Breast epithelium (tissue), 4 donors: ENCODE measurements at regions of chr15 and their contacts with region 1.

Region 1: DNA sequence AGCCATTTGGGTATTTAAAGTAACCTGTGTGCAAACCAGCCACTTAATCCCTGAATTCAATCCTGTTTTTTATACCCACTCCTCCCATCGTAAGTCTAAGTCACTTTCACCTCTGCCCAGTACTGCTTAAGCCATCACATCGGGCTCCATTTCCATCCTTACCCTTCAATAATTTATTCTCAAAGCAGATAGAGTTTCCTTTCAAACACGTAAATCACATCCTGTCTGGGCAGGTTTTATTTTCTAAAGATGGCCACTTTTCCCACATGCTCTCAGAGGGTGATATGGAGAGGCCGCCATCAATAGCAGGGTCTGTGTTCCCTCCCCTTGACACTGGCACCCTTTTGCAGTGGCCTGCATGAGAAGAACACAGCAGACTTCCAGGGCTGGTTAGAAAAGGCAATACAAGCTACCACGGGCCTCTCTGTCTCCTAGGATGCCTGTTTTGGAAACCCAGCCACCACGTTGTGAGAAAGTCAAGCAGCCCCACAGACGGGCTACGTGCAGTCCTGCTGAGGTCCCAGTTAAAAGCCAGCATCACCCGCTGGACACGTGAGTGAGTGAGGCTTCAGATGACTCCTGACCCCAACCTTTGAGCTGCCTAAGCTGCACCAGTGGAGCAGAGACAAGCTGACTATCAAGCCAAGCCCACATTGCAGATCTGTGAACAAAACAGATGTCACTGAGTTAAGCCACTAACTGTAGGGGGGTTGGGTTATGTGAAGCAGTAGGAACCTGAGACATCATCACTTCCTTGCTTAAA is 241.8 kb upstream of the SLCO3A1 start:
- DNase-seq: no peak
- H3K4me3 ChIP-seq: no peak overlapping the region
- H3K27ac ChIP-seq: no peak overlapping the region
- H3K4me1 ChIP-seq: no peaks in the 10 kb centered on the region
- H3K27me3 ChIP-seq: no peaks in the 10 kb centered on the region
- CTCF ChIP-seq: no peak
- POLR2A ChIP-seq: no peak

Region 2: DNA sequence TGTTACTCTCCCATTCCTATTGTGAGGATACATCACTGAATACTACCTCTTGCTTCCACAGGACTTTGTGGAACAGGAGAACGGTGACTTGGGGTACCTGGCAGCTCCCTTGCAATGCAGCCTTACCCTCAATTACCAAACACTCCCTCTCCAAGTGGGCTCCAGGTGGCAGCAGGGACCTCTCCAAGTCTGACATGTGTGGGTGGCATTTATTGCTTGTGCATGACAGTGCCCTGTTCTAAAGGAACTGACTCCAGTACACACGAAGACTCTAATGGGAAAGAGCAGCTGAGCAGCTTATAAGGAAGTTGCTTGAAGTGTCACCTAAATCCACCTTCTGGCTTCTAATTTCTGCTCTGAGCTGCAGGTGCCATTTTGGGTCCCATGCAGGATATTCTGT is 67.7 kb after region 1 on chr15:
- intact Hi-C with region 1: loop called (anchors 2 kb)
- DNase-seq: no peak
- H3K4me3 ChIP-seq: no peak overlapping the region
- H3K27ac ChIP-seq: no peak overlapping the region
- H3K4me1 ChIP-seq: no peaks in the 10 kb centered on the region
- H3K27me3 ChIP-seq: peaks cover 0 to 11% of the 10 kb centered on the region in 2 donors
- CTCF ChIP-seq: no peak
- POLR2A ChIP-seq: no peak